Naive thymus-derived CD8-positive, alpha-beta T cell (primary cell): ENCODE measurements at regions of chr1 and their contacts with region 1.

Region 1: GRCh38 chr1:207868774-207869721 is 41.9 kb downstream of the CD34 start:
- DNase-seq: peak; percentile 49 to 86 (median 74)
- ATAC-seq: peak; percentile 58 to 63
- H3K4me3 Mint-ChIP-seq: peak overlapping the region; percentile 92 to 98 (median 95)
- H3K27ac Mint-ChIP-seq: peak overlapping the region; percentile 89 to 98 (median 94)
- H3K4me1 Mint-ChIP-seq: peaks cover 69 to 88% (median 86%) of the 10 kb centered on the region in 4 donors
- H3K27me3 Mint-ChIP-seq: no peaks in the 10 kb centered on the region

Region 2: DNA sequence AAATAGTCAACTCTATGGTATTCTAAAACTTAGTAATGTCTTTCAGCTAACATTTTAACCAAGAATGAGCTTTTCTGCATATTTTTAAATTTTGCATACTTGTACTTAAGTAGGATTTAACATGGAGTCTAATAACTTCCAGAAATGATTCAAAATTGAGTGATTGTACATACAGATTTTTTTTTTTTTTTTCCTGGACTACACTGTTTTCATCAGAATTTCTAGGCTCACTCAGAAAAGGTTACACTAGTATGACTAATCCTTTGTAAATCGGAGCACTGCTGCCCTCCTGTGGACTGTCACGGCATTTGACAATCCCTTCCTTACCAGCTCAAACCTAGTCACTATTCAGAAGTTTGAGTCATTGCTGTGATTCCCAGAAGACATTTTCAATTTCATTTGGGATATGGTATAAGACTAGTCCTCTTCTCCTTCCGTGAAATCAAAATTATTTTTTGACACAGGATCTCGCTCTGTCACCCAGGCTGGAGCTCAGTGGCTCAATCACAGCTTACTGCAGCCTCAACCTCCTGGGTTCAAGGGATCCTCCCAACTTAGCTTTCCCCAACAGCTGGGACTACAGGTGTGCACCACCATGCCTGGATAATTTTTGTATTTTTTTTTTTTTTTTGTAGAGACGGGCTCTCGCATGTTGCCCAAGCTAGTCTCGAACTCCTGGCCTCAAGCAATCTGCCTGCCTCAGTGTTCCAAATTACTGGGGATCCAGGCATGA is 71.7 kb before region 1 on chr1:
- POLR2A ChIA-PET with region 1: interaction called, 12 read pairs
- DNase-seq: peak; percentile 50 to 87 (median 66)
- ATAC-seq: peak; percentile 75 to 80
- H3K4me3 Mint-ChIP-seq: peak overlapping the region in 2 of 10 donors; percentile 18 to 35
- H3K27ac Mint-ChIP-seq: peak overlapping the region in 5 of 10 donors; percentile 12 to 73 (median 44)
- H3K4me1 Mint-ChIP-seq: peaks cover 24 to 52% (median 45%) of the 10 kb centered on the region in 4 donors
- H3K27me3 Mint-ChIP-seq: no peaks in the 10 kb centered on the region

Region 3: GRCh38 chr1:207811920-207812720 is 56.9 kb before region 1 on chr1:
- POLR2A ChIA-PET with region 1: interaction called, 462 read pairs
- DNase-seq: no peak
- ATAC-seq: no peak
- H3K4me3 Mint-ChIP-seq: peak overlapping the region in 3 of 10 donors; percentile 10 to 30 (median 18)
- H3K27ac Mint-ChIP-seq: peak overlapping the region; percentile 19 to 89 (median 70)
- H3K4me1 Mint-ChIP-seq: peaks cover 42 to 95% (median 91%) of the 10 kb centered on the region in 4 donors
- H3K27me3 Mint-ChIP-seq: no peaks in the 10 kb centered on the region

Region 4: GRCh38 chr1:207836591-207837347 is 32.3 kb before region 1 on chr1:
- POLR2A ChIA-PET with region 1: interaction called, 16 read pairs
- DNase-seq: no peak
- ATAC-seq: no peak
- H3K4me3 Mint-ChIP-seq: peak overlapping the region in 6 of 10 donors; percentile 1 to 57 (median 40)
- H3K27ac Mint-ChIP-seq: peak overlapping the region; percentile 68 to 100 (median 88)
- H3K4me1 Mint-ChIP-seq: peaks cover 59 to 98% (median 91%) of the 10 kb centered on the region in 4 donors
- H3K27me3 Mint-ChIP-seq: no peaks in the 10 kb centered on the region

Region 5: GRCh38 chr1:207885129-207886032 is 16.3 kb after region 1 on chr1:
- POLR2A ChIA-PET with region 1: interaction called, 112 read pairs
- DNase-seq: peak; percentile 47 to 82 (median 68)
- ATAC-seq: peak; percentile 74 to 76
- H3K4me3 Mint-ChIP-seq: peak overlapping the region in 7 of 10 donors; percentile 33 to 91 (median 52)
- H3K27ac Mint-ChIP-seq: peak overlapping the region; percentile 76 to 99 (median 96)
- H3K4me1 Mint-ChIP-seq: peaks cover 29 to 43% (median 41%) of the 10 kb centered on the region in 4 donors
- H3K27me3 Mint-ChIP-seq: peaks cover 0 to 11% (median 2%) of the 10 kb centered on the region in 5 donors

Region 6: DNA sequence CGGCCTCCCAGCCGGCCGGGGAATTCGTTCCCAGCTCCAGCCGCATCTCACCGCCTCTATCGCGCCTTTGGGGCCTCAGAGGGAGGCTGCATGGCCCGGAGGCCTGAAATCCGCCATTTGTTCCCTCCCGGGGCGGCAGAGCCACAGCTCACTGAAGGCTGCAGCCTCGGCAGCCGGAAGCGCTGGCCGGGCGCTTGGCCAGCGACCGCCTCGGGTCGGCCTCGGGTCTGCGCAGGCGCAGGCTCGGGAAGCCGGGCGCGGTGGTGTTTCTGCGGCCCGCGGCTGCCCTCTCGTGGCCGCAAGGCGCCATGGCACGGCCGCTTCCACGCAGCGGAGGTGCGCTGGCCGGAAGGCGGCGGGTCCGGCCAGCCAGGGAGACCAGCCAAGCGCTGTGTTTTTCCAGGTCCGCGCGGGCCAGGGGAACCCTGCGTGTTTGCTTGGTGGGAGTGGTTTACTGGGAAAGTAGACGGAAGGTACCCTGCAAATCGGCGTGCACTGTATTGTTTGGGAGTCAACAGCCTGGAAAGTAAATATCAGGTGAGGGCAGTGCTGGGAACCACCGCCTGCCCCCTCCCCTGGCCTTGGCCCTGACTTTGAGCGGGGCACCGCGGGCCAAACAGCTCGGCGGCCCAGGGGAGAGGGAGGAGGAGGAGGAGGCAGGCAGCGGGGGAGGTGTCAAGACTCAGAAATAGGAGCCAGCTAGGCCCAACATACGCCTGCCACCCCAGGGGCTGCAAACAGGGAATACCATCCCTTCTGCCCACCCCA is 94.6 kb after region 1 on chr1:
- POLR2A ChIA-PET with region 1: interaction called, 15 read pairs
- DNase-seq: peak; percentile 66 to 89 (median 84)
- ATAC-seq: peak; percentile 81 to 83
- H3K4me3 Mint-ChIP-seq: peak overlapping the region; percentile 71 to 90 (median 84)
- H3K27ac Mint-ChIP-seq: peak overlapping the region in 8 of 10 donors; percentile 37 to 82 (median 62)
- H3K4me1 Mint-ChIP-seq: peaks cover 10 to 19% (median 15%) of the 10 kb centered on the region in 4 donors
- H3K27me3 Mint-ChIP-seq: peaks cover 4 to 31% (median 23%) of the 10 kb centered on the region in 5 donors